ENCODE measurements at regions of chr20 and their contacts with region 1.

Region 1: GRCh38 chr20:18904624-18905023 is 91.0 kb downstream of the SCP2D1 start:
- DNase-seq: no peak
- ATAC-seq: no peak
- H3K4me3 ChIP-seq: no peak overlapping the region
- H3K27ac ChIP-seq: no peak overlapping the region
- H3K4me1 ChIP-seq: no peaks in the 10 kb centered on the region
- H3K27me3 ChIP-seq: no peaks in the 10 kb centered on the region
- CTCF ChIP-seq: peak in 1 of 5 experiments; percentile 11
- POLR2A ChIP-seq: no peak

Region 2: DNA sequence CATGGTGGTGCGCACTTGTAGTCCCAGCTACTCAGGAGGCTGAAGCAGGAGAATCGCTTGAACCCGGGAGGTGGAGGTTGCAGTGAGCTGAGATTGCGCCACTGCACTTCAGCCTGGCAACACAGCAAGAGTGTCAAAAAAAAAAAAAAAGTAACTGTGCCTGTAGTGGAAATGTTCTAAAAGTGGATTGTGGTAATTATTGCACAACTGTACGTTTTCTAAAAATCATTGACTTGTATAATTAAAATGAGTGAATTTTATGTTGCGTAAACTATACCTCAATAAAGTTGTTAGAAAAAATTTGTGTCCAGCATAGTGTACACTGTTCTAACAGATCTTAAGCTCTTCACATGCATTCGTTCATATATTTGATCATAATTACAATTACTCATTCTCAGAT is 391.4 kb before region 1 on chr20:
- in situ Hi-C with region 1: no loop called
- intact Hi-C with region 1: no loop called
- DNase-seq: no peak
- ATAC-seq: no peak
- H3K4me3 ChIP-seq: no peak overlapping the region
- H3K27ac ChIP-seq: no peak overlapping the region
- H3K4me1 ChIP-seq: peaks cover 3% of the 10 kb centered on the region in 2 donors
- H3K27me3 ChIP-seq: no peaks in the 10 kb centered on the region
- CTCF ChIP-seq: no peak
- POLR2A ChIP-seq: no peak

Region 3: DNA sequence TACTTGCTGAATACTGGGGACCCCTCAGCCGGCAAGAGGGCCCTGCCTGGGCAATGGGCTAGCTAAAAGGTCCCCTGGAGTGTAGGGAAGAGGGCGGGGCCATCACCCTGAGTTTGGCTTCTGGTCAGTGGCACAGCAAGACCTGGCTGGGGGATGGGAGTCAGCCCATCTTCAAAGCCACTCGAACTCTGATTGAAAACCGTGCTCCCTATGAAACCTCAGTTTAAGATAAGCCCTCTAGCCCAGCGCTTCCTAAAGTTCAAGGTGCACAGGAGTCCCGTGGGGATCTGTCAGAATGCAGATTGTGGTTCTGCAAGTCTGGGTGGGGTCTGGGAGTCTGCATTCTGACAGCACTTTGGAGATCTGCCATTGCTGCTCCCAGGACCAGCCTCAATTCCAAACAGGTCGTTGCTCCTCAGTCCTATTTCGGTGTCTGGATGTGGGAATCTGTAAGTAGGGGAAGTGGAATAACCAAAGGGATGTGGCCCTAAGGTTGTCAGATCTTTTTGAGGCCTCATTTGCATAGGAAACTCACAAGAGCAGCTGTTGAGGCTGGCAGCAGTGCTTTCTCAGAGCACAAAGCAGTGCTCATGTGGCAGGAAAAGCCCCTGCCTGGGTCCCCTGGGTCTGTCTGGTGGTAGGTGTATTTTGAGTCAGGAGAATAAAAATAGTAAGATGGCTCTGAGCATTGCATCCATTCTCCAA is 176.3 kb before region 1 on chr20:
- in situ Hi-C with region 1: no loop called
- intact Hi-C with region 1: no loop called
- DNase-seq: no peak
- ATAC-seq: no peak
- H3K4me3 ChIP-seq: no peak overlapping the region
- H3K27ac ChIP-seq: no peak overlapping the region
- H3K4me1 ChIP-seq: no peaks in the 10 kb centered on the region
- H3K27me3 ChIP-seq: no peaks in the 10 kb centered on the region
- CTCF ChIP-seq: no peak
- POLR2A ChIP-seq: no peak

Region 4: GRCh38 chr20:19185090-19185489 is 280.5 kb after region 1 on chr20:
- in situ Hi-C with region 1: loop called in 1 of 4 experiments (anchors 25 kb)
- intact Hi-C with region 1: no loop called
- DNase-seq: no peak
- ATAC-seq: no peak
- H3K4me3 ChIP-seq: no peak overlapping the region
- H3K27ac ChIP-seq: no peak overlapping the region
- H3K4me1 ChIP-seq: no peaks in the 10 kb centered on the region
- H3K27me3 ChIP-seq: no peaks in the 10 kb centered on the region
- CTCF ChIP-seq: no peak
- POLR2A ChIP-seq: no peak

Region 5: GRCh38 chr20:19265632-19266373 is 361.2 kb after region 1 on chr20:
- in situ Hi-C with region 1: no loop called
- intact Hi-C with region 1: no loop called
- DNase-seq: no peak
- ATAC-seq: no peak
- H3K4me3 ChIP-seq: no peak overlapping the region
- H3K27ac ChIP-seq: no peak overlapping the region
- H3K4me1 ChIP-seq: peaks cover 0 to 9% of the 10 kb centered on the region in 2 donors
- H3K27me3 ChIP-seq: no peaks in the 10 kb centered on the region
- CTCF ChIP-seq: no peak
- POLR2A ChIP-seq: no peak

Measured in gastrocnemius medialis (tissue), 4 donors.